Uterus (tissue), 4 donors: ENCODE measurements at regions of chr12 and their contacts with region 1.

Region 1: DNA sequence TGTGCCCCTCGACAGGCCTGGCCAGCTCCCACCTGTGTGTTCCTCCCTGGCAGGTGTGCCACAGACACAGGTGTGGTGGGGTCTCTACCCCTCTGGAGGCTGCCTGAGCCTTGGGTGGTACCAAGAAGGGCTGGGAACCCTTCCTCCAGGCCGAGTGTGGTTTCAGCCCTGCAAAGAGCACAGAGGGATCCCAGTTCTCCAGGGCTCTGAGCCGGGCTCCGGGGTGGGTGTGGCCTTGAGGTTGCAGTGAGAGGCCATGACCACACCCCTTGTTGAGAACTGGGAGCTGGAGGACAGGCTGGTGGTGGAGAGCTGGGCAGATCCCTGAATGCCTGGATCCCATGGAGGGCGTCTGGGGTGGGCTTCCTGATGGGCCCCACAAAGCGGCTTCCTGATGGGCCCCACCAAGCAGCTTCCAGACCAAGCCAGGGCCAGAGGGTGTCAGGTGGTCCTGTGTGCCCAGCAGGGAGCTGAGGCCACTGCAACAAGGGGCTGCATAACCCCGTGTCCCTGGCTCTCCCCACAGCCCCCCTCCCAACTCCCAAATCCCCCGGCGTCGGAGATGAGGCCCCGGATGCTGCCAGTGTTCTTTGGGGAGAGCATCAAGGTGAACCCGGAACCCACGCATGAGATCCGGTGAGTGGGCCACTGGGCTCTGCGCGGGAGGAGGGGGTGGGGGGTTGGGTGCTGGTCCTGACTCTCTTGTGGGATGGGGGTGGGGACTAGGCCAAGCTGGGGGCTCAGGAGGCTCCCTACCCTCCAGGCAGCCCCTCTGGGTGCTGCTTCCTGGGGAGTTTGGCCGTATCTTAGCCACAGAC is 16.6 kb downstream of the RFLNA start:
- DNase-seq: no peak
- H3K4me3 ChIP-seq: no peak overlapping the region
- H3K27ac ChIP-seq: no peak overlapping the region
- H3K4me1 ChIP-seq: no peaks in the 10 kb centered on the region
- H3K27me3 ChIP-seq: no peaks in the 10 kb centered on the region
- CTCF ChIP-seq: no peak
- POLR2A ChIP-seq: no peak

Region 2: GRCh38 chr12:124053851-124054250 is 257.6 kb before region 1 on chr12:
- intact Hi-C with region 1: loop called (anchors 10 kb)
- DNase-seq: peak; percentile 52 to 69
- H3K4me3 ChIP-seq: no peak overlapping the region
- H3K27ac ChIP-seq: no peak overlapping the region
- H3K4me1 ChIP-seq: no peaks in the 10 kb centered on the region
- H3K27me3 ChIP-seq: no peaks in the 10 kb centered on the region
- CTCF ChIP-seq: peak; percentile 57 to 81 (median 76)
- POLR2A ChIP-seq: no peak

Region 3: DNA sequence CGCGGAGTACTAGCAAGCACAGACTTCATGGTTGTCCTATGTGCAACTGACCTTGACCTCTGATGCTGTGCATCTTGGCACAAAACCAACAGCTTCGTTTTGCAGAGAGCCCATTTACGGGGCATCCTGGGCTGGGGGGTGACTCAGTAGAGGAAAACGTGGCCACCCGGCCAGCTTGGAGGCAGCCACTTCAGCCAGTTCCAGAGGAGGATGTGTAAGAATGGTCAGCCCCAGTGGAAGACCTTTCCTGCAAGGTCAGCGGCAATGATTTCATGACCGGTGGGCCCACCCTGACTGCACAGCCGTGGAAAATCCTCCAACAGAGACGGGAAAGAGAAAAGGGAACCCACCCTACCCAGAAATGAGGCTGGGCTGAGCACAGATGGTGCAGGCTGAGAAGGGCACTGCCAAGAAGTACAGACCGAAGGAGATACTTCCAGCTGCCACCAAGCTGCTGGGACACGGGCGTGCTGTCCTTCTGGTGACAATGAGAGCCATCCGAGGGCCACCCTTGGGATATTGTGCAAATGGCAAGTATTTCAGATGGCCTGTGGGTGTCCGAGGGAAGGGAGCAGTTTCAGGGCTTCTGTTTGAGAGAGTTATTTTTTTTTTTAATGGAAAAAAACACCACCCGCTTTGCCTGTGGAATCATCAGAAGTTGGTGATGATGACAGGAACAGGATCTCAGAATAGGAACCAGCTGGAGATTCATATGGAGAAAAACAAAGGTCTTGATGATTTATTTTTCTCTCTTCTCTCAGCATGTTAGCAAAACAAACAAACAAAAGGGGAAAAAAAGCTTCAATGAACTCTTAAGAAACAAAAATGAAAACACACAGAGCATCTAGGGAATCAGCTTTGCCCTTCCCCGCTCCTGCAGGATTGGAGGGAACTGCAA is 136.8 kb before region 1 on chr12:
- intact Hi-C with region 1: no loop called
- DNase-seq: no peak
- H3K4me3 ChIP-seq: no peak overlapping the region
- H3K27ac ChIP-seq: no peak overlapping the region
- H3K4me1 ChIP-seq: no peaks in the 10 kb centered on the region
- H3K27me3 ChIP-seq: no peaks in the 10 kb centered on the region
- CTCF ChIP-seq: no peak
- POLR2A ChIP-seq: no peak